ENCODE measurements at regions of chr3 and their contacts with region 1.

Region 1: GRCh38 chr3:45906681-45907407 is 20.5 kb downstream of the CCR9 start:
- DNase-seq: no peak
- ATAC-seq: no peak
- H3K4me3 ChIP-seq: no peak overlapping the region
- H3K27ac ChIP-seq: no peak overlapping the region
- H3K4me1 ChIP-seq: no peaks in the 10 kb centered on the region
- H3K27me3 ChIP-seq: no peaks in the 10 kb centered on the region

Region 2: DNA sequence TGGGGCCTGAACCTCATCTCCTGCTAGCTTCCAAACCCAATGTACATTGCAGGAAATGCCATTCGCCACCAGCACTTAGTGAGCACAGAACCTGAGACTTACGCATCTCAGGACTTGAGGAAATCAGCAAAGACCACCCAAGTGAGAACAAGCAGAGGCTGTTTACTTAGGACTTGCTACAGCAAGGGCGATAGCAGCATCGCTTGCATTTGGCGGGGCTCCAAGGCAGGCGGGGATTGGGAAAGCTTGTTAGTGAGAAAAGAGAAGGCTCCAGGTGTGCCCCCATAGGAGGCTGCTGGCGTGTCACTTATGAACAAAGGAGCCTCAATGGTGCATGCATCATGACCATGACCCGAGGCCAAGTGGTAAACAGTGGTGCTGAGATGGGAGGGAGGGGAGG is 130.2 kb before region 1 on chr3:
- intact Hi-C with region 1: loop called in 1 of 2 experiments (anchors 10 kb)
- DNase-seq: no peak
- ATAC-seq: no peak
- H3K4me3 ChIP-seq: no peak overlapping the region
- H3K27ac ChIP-seq: no peak overlapping the region
- H3K4me1 ChIP-seq: no peaks in the 10 kb centered on the region
- H3K27me3 ChIP-seq: no peaks in the 10 kb centered on the region

Region 3: DNA sequence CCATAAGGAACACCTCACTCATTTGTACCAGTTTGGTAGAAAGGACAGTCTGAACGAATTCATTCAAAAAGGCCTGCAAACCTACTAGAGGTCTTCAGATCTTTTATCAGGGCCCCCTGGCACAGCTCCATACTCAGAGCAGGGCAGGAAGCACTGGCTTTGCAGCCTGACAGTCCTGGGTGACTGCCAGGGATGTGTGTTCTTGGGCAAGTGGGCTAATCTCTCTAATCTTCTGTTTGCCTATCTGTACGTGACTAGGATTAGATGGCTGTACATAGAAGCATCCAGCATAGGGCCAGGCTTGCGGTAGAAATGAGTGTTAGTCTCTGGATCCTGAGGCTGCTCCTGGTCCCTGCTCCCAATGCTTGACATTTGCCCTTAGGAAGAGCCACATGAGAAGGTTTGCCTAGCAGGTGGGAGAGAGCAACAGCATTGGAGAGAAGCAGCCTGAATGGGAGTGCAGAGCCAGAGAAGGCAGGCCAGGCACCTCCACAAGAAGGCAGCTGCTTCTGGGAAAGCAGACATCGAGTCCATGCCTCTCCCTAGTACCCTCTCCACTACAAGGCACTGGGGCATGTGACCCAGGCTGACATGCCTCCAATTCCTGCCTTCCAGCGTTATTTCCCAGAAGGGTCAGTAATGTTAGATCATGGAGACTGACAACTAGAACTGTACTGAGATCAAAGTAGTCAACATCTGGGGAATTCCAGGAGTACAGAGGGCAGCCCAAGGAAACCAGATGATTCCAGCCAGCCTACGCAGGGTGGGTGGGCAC is 35.4 kb after region 1 on chr3:
- intact Hi-C with region 1: no loop called
- DNase-seq: no peak
- ATAC-seq: no peak
- H3K4me3 ChIP-seq: no peak overlapping the region
- H3K27ac ChIP-seq: peak overlapping the region in 1 of 2 donors; percentile 1
- H3K4me1 ChIP-seq: no peaks in the 10 kb centered on the region
- H3K27me3 ChIP-seq: no peaks in the 10 kb centered on the region

Measured in aorta (tissue), 5 donors.